Vagina (tissue), 2 donors: ENCODE measurements at regions of chr5 and their contacts with region 1.

Region 1: DNA sequence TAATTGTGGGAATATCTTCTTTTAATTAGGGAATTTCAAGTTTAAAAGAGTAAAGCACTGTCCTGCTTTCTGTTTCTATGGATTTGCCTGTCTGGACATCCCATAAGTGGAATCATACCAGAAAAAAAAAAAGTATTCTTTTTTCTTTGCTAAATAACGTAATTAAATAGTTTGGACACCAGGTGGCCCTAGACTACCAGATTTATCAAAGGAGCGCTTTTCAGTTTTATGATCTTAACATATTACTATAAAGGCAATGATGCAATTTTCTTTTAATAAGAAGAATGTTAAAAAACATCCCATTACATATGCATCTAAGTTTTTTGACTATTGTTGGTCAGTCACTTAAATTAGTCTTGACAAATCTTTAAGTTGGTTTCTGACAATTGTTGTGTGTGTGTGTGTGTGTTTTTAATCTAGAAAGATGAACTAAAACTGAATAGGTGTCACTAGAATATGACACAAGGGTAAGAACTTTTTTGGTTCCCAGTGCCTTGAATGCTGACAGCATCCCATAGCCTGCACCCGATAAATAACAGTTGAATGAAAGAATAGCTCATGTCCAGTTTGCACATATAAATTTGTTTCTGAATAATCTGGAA is 49.5 kb downstream of the C5orf22 start:
- DNase-seq: no peak
- H3K4me3 ChIP-seq: no peak overlapping the region
- H3K27ac ChIP-seq: no peak overlapping the region
- H3K4me1 ChIP-seq: no peaks in the 10 kb centered on the region
- H3K27me3 ChIP-seq: no peaks in the 10 kb centered on the region
- CTCF ChIP-seq: peak in 1 of 3 experiments; percentile 60
- POLR2A ChIP-seq: no peak

Region 2: DNA sequence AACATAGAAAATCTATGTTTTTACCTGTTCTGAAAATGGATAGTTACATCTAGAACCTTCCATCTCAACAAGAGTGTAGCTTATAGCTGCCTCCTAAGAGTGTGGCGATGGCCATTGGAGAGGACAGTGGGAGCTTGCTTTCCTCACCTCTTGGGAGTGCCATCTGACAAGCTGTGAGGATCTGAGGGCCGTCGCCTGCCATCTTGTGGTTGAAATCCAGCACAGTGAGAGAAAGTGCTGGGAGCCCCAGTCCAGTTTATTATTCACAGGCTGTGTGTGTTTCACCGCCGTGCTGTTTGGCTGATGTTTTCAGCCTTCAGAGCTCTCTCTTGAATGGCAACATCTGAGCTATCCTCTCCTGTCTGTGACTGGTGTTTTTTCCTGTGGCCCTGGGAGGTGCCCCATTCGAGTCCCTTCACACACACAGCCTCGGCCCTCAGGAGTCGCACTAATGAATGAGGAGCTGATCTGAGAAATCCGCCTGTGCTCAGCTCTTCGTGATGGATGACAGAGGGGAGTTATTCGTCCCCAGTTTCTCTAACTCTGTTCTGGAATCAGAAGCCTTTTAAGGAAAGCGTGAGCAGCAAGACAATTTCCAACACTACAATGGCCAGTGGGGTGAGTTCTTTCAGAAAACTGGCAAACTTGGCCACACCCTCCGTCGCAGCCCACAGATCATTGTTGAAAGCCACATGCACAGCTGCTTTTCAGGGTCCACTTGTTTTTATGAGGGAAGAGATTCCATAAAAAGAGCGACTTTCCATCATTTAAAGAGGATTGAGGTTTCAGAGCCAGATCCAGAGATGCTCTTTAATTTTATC is 227.7 kb after region 1 on chr5:
- intact Hi-C with region 1: loop called (anchors 10 kb)
- DNase-seq: no peak
- H3K4me3 ChIP-seq: no peak overlapping the region
- H3K27ac ChIP-seq: no peak overlapping the region
- H3K4me1 ChIP-seq: no peaks in the 10 kb centered on the region
- H3K27me3 ChIP-seq: no peaks in the 10 kb centered on the region
- CTCF ChIP-seq: peak in 1 of 3 experiments; percentile 63
- POLR2A ChIP-seq: no peak